ENCODE measurements at regions of chr16 and their contacts with region 1.

Region 1: GRCh38 chr16:71723537-71724319 is 773 bp downstream of the PHLPP2 start:
- DNase-seq: peak; percentile 72
- H3K4me3 Mint-ChIP-seq: peak overlapping the region; percentile 85
- H3K27ac Mint-ChIP-seq: no peak overlapping the region
- H3K4me1 Mint-ChIP-seq: peaks cover 14% of the 10 kb centered on the region
- H3K27me3 Mint-ChIP-seq: peaks cover 6% of the 10 kb centered on the region

Region 2: GRCh38 chr16:69848637-69849545 is 1874.8 kb before region 1 on chr16:
- intact Hi-C with region 1: no loop called
- DNase-seq: no peak
- H3K4me3 Mint-ChIP-seq: no peak overlapping the region
- H3K27ac Mint-ChIP-seq: no peak overlapping the region
- H3K4me1 Mint-ChIP-seq: no peaks in the 10 kb centered on the region
- H3K27me3 Mint-ChIP-seq: no peaks in the 10 kb centered on the region

Region 3: GRCh38 chr16:70800781-70801530 is 922.8 kb before region 1 on chr16 and contains the start of gene VAC14:
- intact Hi-C with region 1: loop called (anchors 5 kb)
- DNase-seq: peak; percentile 93
- H3K4me3 Mint-ChIP-seq: peak within 1 kb of the TSS; percentile 97
- H3K27ac Mint-ChIP-seq: peak within 1 kb of the TSS; percentile 89
- H3K4me1 Mint-ChIP-seq: peaks cover 27% of the 10 kb centered on the region
- H3K27me3 Mint-ChIP-seq: peaks cover 11% of the 10 kb centered on the region
- total RNA-seq, gene VAC14: 36.6 and 37.5 TPM in 2 replicates

Region 4: GRCh38 chr16:71461686-71462648 is 261.8 kb before region 1 on chr16 and contains the start of gene ZNF23:
- intact Hi-C with region 1: loop called (anchors 10 kb)
- DNase-seq: peak; percentile 71
- H3K4me3 Mint-ChIP-seq: peak within 1 kb of the TSS; percentile 86
- H3K27ac Mint-ChIP-seq: peak within 1 kb of the TSS; percentile 86
- H3K4me1 Mint-ChIP-seq: peaks cover 13% of the 10 kb centered on the region
- H3K27me3 Mint-ChIP-seq: peaks cover 1% of the 10 kb centered on the region
- total RNA-seq, gene ZNF23: 4.9 and 6.4 TPM in 2 replicates

Region 5: GRCh38 chr16:71746442-71747046 is 22.8 kb after region 1 on chr16:
- intact Hi-C with region 1: loop called (anchors 2 kb)
- DNase-seq: no peak
- H3K4me3 Mint-ChIP-seq: no peak overlapping the region
- H3K27ac Mint-ChIP-seq: no peak overlapping the region
- H3K4me1 Mint-ChIP-seq: peaks cover 5% of the 10 kb centered on the region
- H3K27me3 Mint-ChIP-seq: no peaks in the 10 kb centered on the region

Region 6: DNA sequence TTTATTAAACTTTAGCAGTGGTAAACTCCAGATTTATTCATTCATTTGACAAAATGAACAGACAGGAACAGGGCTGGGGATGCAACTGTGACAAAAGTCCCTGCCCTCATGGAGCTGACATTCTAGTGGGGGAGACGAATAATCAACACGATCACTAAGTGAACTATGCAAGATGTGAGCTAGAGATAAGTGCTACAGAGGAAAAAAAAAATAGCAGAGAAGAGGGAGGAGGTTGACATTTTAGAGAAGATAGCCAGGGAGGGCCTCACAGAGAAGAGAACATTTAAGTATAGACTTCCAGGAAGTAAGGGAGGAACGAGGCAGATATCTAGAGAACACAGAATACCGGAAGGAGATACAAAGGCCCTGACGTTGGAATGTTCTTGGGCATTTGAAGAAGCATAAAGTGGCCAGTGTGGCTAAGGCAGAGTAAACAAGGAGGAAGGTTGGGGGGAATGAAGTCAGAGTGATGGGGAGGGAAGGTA is 102.8 kb after region 1 on chr16:
- intact Hi-C with region 1: no loop called
- DNase-seq: no peak
- H3K4me3 Mint-ChIP-seq: no peak overlapping the region
- H3K27ac Mint-ChIP-seq: no peak overlapping the region
- H3K4me1 Mint-ChIP-seq: peaks cover 6% of the 10 kb centered on the region
- H3K27me3 Mint-ChIP-seq: peaks cover 2% of the 10 kb centered on the region

Region 7: GRCh38 chr16:71845639-71846430 is 122.1 kb after region 1 on chr16 and contains the start of gene ATXN1L:
- intact Hi-C with region 1: loop called (anchors 2 kb)
- DNase-seq: peak; percentile 94
- H3K4me3 Mint-ChIP-seq: peak within 1 kb of the TSS; percentile 93
- H3K27ac Mint-ChIP-seq: peak within 1 kb of the TSS; percentile 94
- H3K4me1 Mint-ChIP-seq: peaks cover 52% of the 10 kb centered on the region
- H3K27me3 Mint-ChIP-seq: no peaks in the 10 kb centered on the region
- total RNA-seq, gene ATXN1L: 20.1 and 20.6 TPM in 2 replicates

Region 8: DNA sequence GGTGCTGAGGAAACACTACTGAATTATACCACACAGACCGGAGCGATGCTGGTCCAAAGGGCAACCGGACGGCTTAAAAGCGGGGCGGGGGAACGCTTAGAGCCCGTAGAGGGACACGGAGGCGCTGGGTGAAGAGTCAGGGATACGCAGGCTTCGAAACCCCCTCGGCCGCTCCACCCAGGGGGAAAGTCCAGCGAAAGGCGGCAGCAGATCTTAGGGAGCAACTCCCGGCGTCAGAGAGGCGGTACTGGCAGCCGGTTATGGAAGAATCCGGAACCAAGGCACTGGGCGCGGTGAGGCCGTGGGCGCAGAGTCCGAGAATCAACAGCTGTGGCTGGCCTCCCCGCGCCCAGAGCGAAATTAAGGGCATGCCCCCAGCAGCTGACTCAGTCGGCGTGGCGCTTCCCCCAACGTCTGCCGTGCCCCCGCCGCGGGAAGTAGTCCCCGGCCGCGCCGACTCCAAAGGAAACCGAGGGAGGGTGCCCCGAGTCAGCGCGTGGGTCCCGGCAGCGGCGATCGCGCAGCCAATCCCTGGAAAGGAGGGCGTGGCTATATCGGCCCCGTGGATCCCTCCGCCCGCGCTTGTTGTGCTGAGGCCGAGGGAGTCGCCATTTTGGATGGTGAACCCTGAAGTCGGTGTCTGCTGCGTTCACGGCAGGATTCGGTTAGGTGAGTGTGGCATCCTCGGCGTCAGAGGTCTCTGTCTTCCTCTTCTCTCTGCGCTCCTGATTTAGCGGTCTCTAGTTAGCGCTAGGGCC is 171.4 kb after region 1 on chr16 and contains the start of gene IST1:
- intact Hi-C with region 1: loop called (anchors 1 kb)
- DNase-seq: peak; percentile 98
- H3K4me3 Mint-ChIP-seq: peak within 1 kb of the TSS; percentile 90
- H3K27ac Mint-ChIP-seq: peak within 1 kb of the TSS; percentile 91
- H3K4me1 Mint-ChIP-seq: peaks cover 12% of the 10 kb centered on the region
- H3K27me3 Mint-ChIP-seq: no peaks in the 10 kb centered on the region
- total RNA-seq, gene IST1: 156 and 169 TPM in 2 replicates

Region 9: DNA sequence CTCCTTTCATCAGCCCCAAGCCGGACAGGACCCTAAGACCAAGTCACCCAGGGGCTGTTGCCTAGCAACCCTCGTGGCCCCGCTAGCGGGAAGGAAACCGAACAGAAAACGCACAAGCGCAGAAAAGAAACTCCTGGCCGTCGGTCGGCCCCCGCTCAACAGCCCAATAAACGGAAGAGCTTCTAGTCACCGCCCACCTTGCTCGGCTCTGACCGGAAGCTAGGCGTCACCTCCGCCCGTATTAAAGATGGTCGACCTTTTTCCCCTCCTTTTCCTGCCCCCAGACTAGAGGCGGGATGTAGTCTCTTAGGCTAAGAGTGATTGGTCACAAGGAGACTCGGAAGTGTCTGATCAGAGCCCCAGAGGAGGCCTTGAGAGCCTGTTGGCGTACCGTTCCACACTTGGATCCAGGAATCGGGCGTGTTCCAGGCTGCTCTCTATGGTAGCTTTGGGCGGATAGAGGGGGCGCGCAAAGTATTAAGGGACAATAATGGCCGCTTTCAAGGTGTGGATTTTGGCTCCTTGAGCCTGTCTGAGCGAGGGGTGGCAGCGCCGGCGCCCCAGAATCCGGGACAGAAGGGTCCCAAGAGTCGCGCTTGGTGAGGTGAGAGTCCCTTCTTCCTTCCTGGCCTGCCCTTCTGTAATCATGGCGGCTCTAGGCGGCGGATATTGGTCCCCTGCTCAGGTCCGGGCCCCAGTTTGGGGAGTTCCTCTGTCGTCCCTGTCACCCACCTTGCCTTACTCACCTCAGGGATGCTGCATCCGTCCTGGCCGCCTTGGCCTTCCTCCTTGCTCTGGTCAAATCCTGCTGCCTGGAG is 369.9 kb after region 1 on chr16 and contains the starts of genes DHX38 and TXNL4B:
- intact Hi-C with region 1: loop called (anchors 5 kb)
- DNase-seq: peak; percentile 92
- H3K4me3 Mint-ChIP-seq: peak within 1 kb of the TSS; percentile 99
- H3K27ac Mint-ChIP-seq: peak within 1 kb of the TSS; percentile 99
- H3K4me1 Mint-ChIP-seq: peaks cover 64% of the 10 kb centered on the region
- H3K27me3 Mint-ChIP-seq: no peaks in the 10 kb centered on the region
- total RNA-seq, gene DHX38: 89.8 and 99.4 TPM in 2 replicates
- total RNA-seq, gene TXNL4B: 24.0 and 25.1 TPM in 2 replicates